ENCODE measurements at regions of chr1 and their contacts with region 1.

Region 1: GRCh38 chr1:229270547-229271447 is at the start of gene RAB4A:
- DNase-seq: peak; percentile 83 to 84
- H3K4me3 ChIP-seq: peak within 1 kb of the TSS; percentile 2 to 58 (median 57)
- H3K27ac ChIP-seq: peak within 1 kb of the TSS; percentile 82 to 87 (median 83)
- H3K4me1 ChIP-seq: peaks cover 46 to 58% of the 10 kb centered on the region in 2 donors
- H3K27me3 ChIP-seq: no peaks in the 10 kb centered on the region
- CTCF ChIP-seq: no peak
- POLR2A ChIP-seq: peak; percentile 13 to 82
- total RNA-seq, gene RAB4A: 44.9 to 73.6 (median 60.2) TPM

Region 2: GRCh38 chr1:229127301-229127700 is 143.5 kb before region 1 on chr1:
- intact Hi-C with region 1: no loop called
- DNase-seq: no peak
- H3K4me3 ChIP-seq: no peak overlapping the region
- H3K27ac ChIP-seq: no peak overlapping the region
- H3K4me1 ChIP-seq: peaks cover 0 to 10% of the 10 kb centered on the region in 2 donors
- H3K27me3 ChIP-seq: no peaks in the 10 kb centered on the region
- CTCF ChIP-seq: no peak
- POLR2A ChIP-seq: no peak

Region 3: DNA sequence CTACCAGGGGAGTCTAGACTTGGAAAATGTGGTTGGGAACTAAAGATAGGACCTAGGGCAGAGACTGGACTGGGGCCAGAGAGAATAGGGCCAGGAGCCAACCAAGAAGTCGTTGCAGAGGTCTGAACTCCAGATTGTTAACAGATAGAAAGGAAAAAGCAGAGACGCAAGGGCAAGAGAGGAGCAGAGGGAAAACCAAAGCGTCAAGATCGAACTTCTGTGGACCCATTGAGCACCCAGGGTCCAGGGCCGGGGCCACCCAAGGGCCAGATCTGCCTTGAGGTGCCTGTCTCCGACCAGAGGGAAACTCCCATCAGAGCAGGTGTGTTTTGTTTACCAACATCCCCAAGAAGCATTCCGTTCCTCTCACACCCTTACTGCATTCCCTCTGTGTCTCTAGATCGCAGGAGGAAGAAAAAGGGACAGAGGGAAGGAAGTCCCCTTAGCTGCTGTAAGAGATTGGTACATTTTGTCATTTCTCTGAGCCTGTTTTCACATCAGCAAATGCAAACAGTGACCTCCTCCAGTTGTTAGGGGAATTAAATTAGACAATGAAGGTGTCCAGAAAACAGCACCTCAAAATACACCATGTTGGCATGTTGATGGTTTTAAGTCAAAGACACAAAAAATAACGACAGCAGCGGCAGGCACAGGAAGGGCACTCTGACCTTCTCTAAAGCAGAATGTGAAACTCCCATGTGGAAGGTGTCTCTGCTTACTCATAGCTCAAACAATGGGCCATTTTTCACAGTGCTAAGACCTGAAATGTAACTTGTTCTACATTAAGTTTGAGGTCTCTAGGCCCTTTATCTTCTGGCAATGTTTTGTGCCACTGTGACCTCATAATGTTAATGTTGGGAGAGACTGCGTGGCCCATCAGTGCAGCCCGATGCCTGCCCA is 105.7 kb before region 1 on chr1:
- intact Hi-C with region 1: no loop called
- DNase-seq: peak in 1 of 2 donors; percentile 27
- H3K4me3 ChIP-seq: no peak overlapping the region
- H3K27ac ChIP-seq: no peak overlapping the region
- H3K4me1 ChIP-seq: peaks cover 9 to 19% of the 10 kb centered on the region in 2 donors
- H3K27me3 ChIP-seq: no peaks in the 10 kb centered on the region
- CTCF ChIP-seq: no peak
- POLR2A ChIP-seq: no peak

Region 4: DNA sequence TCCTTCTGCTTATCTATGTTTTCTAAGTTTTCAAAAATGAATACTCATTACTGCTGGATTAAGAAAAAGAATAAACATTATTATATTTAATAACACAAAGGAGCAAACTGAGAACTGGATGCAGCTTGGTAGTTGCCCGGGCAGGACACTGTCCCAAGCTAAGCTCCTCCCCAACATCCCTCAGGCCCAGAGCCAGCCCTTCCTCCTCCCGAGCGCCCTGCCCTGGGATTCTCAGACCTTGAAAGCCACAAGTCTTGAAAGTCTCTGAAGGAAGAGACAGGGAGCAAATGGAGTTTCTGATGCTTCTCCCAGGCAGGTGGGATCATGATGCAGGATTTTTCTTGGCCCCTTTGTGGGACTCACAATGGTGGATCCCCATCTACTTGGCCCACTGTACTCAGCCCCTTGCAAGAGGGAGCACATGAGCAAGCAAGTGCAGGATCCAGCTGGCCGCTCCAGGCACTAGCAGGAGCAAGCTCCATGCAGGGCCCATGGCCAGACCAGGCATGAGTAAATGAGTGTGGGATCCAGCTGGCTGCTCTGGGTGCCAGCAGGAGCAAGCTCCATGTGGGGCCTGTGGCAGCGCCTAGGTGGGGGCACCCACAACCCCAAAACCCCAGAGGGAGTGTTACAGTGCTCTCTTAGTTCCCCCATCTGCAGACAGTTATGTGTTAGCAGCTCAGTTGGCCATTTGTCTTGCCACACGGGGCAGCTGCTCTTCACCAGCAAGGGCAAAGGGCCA is 32.0 kb before region 1 on chr1:
- intact Hi-C with region 1: no loop called
- DNase-seq: peak; percentile 34 to 64
- H3K4me3 ChIP-seq: no peak overlapping the region
- H3K27ac ChIP-seq: no peak overlapping the region
- H3K4me1 ChIP-seq: no peaks in the 10 kb centered on the region
- H3K27me3 ChIP-seq: no peaks in the 10 kb centered on the region
- CTCF ChIP-seq: no peak
- POLR2A ChIP-seq: no peak

Region 5: GRCh38 chr1:229341774-229342655 is 71.2 kb after region 1 on chr1:
- intact Hi-C with region 1: loop called (anchors 10 kb)
- DNase-seq: peak; percentile 83 to 84
- H3K4me3 ChIP-seq: peak overlapping the region; percentile 78 to 86 (median 83)
- H3K27ac ChIP-seq: peak overlapping the region; percentile 69 to 70 (median 70)
- H3K4me1 ChIP-seq: peaks cover 0 to 9% of the 10 kb centered on the region in 2 donors
- H3K27me3 ChIP-seq: no peaks in the 10 kb centered on the region
- CTCF ChIP-seq: no peak
- POLR2A ChIP-seq: peak in 1 of 2 donors; percentile 72